MCF 10A (cell line): ENCODE measurements at regions of chr1 and their contacts with region 1.

Region 1: DNA sequence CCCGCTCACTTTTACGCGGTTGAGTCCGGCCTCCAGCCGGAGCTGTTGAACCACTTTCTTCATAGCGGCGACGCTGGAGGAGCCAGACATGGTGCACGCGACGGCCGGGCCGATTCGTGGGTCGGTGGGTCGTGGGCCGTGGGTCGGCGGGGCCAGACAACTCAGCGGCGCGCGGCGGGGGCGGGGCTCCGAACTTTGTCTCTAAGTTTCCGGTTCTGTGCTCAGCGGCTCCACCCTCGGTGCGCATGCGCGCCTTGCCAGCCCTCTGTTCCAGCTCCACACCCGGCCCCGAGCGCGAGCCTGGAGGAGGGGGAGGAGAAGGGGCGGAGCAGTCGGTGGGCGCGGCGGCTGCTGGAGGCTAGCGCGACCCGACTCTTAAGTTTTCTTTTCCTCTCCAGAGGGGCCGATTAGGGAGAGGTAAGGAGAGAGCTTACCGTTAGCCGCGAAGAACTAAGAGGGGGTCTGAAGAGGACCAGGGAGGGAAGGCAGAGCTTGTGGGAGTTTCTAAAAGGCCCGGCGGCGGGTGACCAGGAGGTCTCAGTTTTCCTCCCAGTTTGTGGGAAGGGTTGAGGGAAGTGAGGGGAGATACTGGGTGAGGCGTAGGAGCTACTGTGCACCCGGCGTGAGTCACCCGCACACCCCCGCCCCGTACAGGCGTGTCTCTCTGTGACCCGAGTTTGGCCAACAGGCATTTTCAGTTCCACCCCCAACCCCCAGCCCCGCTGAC is at the starts of genes GNG5 and SPATA1:
- DNase-seq: peak; percentile 97
- H3K4me3 Mint-ChIP-seq: peak within 1 kb of the TSS; percentile 94
- H3K27ac Mint-ChIP-seq: peak within 1 kb of the TSS; percentile 94
- H3K4me1 Mint-ChIP-seq: peaks cover 25% of the 10 kb centered on the region
- H3K27me3 Mint-ChIP-seq: no peaks in the 10 kb centered on the region
- CTCF ChIP-seq: no peak
- total RNA-seq, gene GNG5: 121 and 122 TPM in 2 replicates
- total RNA-seq, gene SPATA1: 1.0 and 1.2 TPM in 2 replicates

Region 2: GRCh38 chr1:84478876-84479868 is 27.0 kb before region 1 on chr1 and contains the start of gene RPF1:
- CTCF ChIA-PET with region 1: interaction called, 7 read pairs
- POLR2A ChIA-PET with region 1: interaction called, 90 read pairs
- intact Hi-C with region 1: no loop called
- DNase-seq: peak; percentile 83
- H3K4me3 Mint-ChIP-seq: peak within 1 kb of the TSS; percentile 88
- H3K27ac Mint-ChIP-seq: peak within 1 kb of the TSS; percentile 95
- H3K4me1 Mint-ChIP-seq: peaks cover 21% of the 10 kb centered on the region
- H3K27me3 Mint-ChIP-seq: no peaks in the 10 kb centered on the region
- CTCF ChIP-seq: no peak
- total RNA-seq, gene RPF1: 36.0 and 43.1 TPM in 2 replicates

Region 3: GRCh38 chr1:84539972-84540371 is 33.8 kb after region 1 on chr1:
- CTCF ChIA-PET with region 1: interaction called, 3 read pairs
- POLR2A ChIA-PET with region 1: interaction called, 10 read pairs
- intact Hi-C with region 1: no loop called
- DNase-seq: no peak
- H3K4me3 Mint-ChIP-seq: no peak overlapping the region
- H3K27ac Mint-ChIP-seq: no peak overlapping the region
- H3K4me1 Mint-ChIP-seq: peaks cover 13% of the 10 kb centered on the region
- H3K27me3 Mint-ChIP-seq: no peaks in the 10 kb centered on the region
- CTCF ChIP-seq: no peak

Region 4: DNA sequence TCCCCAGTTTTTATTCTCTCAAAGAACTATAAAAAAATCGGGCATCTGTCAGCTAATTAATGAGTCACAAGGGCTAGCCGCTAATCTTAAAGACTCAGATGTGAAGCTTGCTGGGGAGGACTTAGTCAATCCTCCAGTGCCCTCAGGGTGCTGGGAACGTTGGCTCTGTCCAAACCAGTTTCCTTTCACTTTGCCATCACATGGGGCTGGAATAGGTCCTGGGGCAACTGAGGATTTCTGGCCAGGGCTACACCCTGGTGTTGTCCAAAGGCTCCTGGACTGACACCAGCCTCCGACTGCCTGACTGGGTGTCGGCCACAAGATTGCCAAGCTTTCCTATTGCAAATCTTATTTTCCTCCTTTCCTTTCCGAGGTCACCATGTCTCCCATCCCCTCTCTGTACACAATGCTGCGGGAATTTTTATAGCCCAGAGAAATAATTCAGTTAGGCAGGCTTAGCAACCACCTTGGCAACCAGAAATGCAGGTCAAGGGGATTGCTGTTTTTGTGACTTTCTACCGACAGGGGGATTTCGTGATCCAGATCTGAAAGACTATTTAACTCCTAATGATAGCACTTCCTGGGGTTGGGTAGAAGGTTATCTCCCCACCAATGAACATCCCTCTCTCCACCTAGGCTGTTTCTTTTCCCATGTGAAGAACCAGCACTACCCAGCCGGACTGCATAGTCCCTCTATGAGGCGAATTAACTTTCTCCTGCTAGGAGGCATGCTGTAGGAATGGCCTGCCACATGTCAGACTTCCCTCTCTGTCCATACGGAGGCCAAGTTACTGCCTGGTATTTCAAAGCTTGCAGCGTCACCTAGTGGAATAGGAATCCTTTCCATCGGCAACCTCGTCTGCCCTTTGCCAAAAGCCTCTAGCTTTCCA is 98.0 kb after region 1 on chr1:
- CTCF ChIA-PET with region 1: interaction called, 10 read pairs
- POLR2A ChIA-PET with region 1: interaction called, 31 read pairs
- intact Hi-C with region 1: loop called (anchors 1 kb)
- DNase-seq: peak; percentile 96
- H3K4me3 Mint-ChIP-seq: peak overlapping the region; percentile 73
- H3K27ac Mint-ChIP-seq: peak overlapping the region; percentile 76
- H3K4me1 Mint-ChIP-seq: peaks cover 26% of the 10 kb centered on the region
- H3K27me3 Mint-ChIP-seq: no peaks in the 10 kb centered on the region
- CTCF ChIP-seq: peak; percentile 11

Region 5: GRCh38 chr1:84690397-84691121 is 184.4 kb after region 1 on chr1 and contains the start of gene SSX2IP:
- CTCF ChIA-PET with region 1: no interaction called
- POLR2A ChIA-PET with region 1: interaction called, 11 read pairs
- intact Hi-C with region 1: no loop called
- DNase-seq: peak; percentile 97
- H3K4me3 Mint-ChIP-seq: peak within 1 kb of the TSS; percentile 97
- H3K27ac Mint-ChIP-seq: peak within 1 kb of the TSS; percentile 83
- H3K4me1 Mint-ChIP-seq: peaks cover 40% of the 10 kb centered on the region
- H3K27me3 Mint-ChIP-seq: no peaks in the 10 kb centered on the region
- CTCF ChIP-seq: no peak
- total RNA-seq, gene SSX2IP: 19.4 and 20.5 TPM in 2 replicates